Heart right ventricle (tissue), 16 donors: ENCODE measurements at regions of chr7 and their contacts with region 1.

Region 1: GRCh38 chr7:80183900-80184685 is 49.5 kb downstream of the GNAI1 start:
- DNase-seq: no peak
- ATAC-seq: no peak
- H3K4me3 ChIP-seq: no peak overlapping the region
- H3K27ac ChIP-seq: no peak overlapping the region
- H3K4me1 ChIP-seq: peaks cover 0 to 36% (median 6%) of the 10 kb centered on the region in 9 donors
- H3K27me3 ChIP-seq: no peaks in the 10 kb centered on the region
- CTCF ChIP-seq: no peak

Region 2: GRCh38 chr7:80127412-80128150 is 56.5 kb before region 1 on chr7:
- intact Hi-C with region 1: no loop called
- DNase-seq: no peak
- ATAC-seq: no peak
- H3K4me3 ChIP-seq: no peak overlapping the region
- H3K27ac ChIP-seq: no peak overlapping the region
- H3K4me1 ChIP-seq: peaks cover 0 to 4% (median 0%) of the 10 kb centered on the region in 9 donors
- H3K27me3 ChIP-seq: no peaks in the 10 kb centered on the region
- CTCF ChIP-seq: no peak

Region 3: GRCh38 chr7:80145780-80146422 is 38.2 kb before region 1 on chr7:
- intact Hi-C with region 1: loop called in 1 of 10 experiments (anchors 5 kb)
- DNase-seq: no peak
- ATAC-seq: peak in 5 of 8 donors; percentile 24 to 52 (median 29)
- H3K4me3 ChIP-seq: no peak overlapping the region
- H3K27ac ChIP-seq: peak overlapping the region in 1 of 10 donors; percentile 32
- H3K4me1 ChIP-seq: peaks cover 0 to 52% (median 13%) of the 10 kb centered on the region in 9 donors
- H3K27me3 ChIP-seq: no peaks in the 10 kb centered on the region
- CTCF ChIP-seq: no peak